Activated CD4-positive, alpha-beta T cell treated with anti-CD3 and anti-CD28 coated beads, Interleukin-2, amount 10 ng/mL, durations not matched to agents 24 days and 14 days (primary cell): ENCODE measurements at regions of chr6 and their contacts with region 1.

Region 1: DNA sequence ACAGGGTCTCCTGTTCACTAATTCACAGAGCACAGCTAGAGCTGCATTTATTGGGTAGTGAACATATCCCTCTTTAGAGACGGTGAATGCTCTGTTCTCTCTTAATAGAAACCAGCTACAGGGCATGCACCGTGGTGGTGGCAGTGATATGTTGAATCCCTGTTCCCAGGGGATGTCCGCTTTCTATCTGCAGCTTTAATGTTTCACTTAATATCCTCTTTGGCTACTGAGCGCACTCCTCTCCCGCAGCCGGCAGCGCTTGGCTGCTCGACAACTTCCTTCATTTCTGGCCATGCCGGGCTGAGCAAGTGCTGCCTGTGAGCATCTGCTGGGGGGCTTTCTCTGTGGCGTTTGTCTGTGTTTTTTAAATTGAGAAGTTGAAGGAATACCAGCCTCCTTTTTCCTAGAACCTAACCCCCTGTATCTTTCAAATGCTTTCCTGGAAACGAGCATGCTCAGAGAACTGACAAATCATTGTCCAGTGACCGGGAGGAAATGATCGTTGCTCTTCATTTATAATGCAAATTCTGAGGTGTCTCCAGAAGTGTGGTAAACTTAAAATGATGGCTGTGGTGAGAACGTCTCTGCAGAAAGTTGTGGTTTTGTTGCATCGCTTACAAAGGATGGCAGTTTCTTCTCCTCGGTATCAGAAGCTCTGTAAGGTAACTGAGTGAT is 297.9 kb downstream of the UTRN start:
- DNase-seq: peak; percentile 91
- H3K4me3 Mint-ChIP-seq: peak overlapping the region; percentile 88
- H3K27ac Mint-ChIP-seq: peak overlapping the region; percentile 92
- H3K4me1 Mint-ChIP-seq: peaks cover 49% of the 10 kb centered on the region
- H3K27me3 Mint-ChIP-seq: no peaks in the 10 kb centered on the region

Region 2: GRCh38 chr6:144595266-144595665 is 12.2 kb after region 1 on chr6:
- intact Hi-C with region 1: loop called (anchors 1 kb)
- DNase-seq: no peak
- H3K4me3 Mint-ChIP-seq: no peak overlapping the region
- H3K27ac Mint-ChIP-seq: no peak overlapping the region
- H3K4me1 Mint-ChIP-seq: peaks cover 18% of the 10 kb centered on the region
- H3K27me3 Mint-ChIP-seq: no peaks in the 10 kb centered on the region

Region 3: DNA sequence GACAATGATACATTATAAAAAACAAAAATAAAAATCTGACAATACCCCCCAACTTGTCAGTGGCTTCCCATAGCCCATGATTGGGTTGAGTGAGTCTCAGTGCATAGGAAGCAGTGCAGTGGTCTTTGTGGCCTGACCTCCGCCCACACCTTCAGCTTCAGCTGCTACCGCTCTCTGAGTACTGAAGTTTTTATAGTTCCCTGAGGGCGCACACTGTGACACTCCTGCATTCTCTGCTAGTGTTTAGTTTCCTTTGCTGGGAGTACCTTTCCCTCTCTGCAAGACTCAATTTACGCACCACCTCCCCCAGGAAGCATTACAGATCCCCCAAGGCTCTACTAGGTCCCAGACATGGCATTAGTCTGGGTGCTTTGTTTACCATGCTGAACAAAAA is 143.1 kb after region 1 on chr6:
- intact Hi-C with region 1: loop called (anchors 5 kb)
- DNase-seq: no peak
- H3K4me3 Mint-ChIP-seq: peak overlapping the region; percentile 15
- H3K27ac Mint-ChIP-seq: peak overlapping the region; percentile 2
- H3K4me1 Mint-ChIP-seq: peaks cover 42% of the 10 kb centered on the region
- H3K27me3 Mint-ChIP-seq: no peaks in the 10 kb centered on the region

Region 4: GRCh38 chr6:145015739-145016558 is 432.9 kb after region 1 on chr6:
- intact Hi-C with region 1: loop called (anchors 1 kb)
- DNase-seq: peak; percentile 63
- H3K4me3 Mint-ChIP-seq: no peak overlapping the region
- H3K27ac Mint-ChIP-seq: peak overlapping the region; percentile 2
- H3K4me1 Mint-ChIP-seq: peaks cover 19% of the 10 kb centered on the region
- H3K27me3 Mint-ChIP-seq: peaks cover 3% of the 10 kb centered on the region

Region 5: GRCh38 chr6:145633981-145634627 is 1051.0 kb after region 1 on chr6:
- intact Hi-C with region 1: loop called (anchors 5 kb)
- DNase-seq: peak; percentile 93
- H3K4me3 Mint-ChIP-seq: no peak overlapping the region
- H3K27ac Mint-ChIP-seq: no peak overlapping the region
- H3K4me1 Mint-ChIP-seq: no peaks in the 10 kb centered on the region
- H3K27me3 Mint-ChIP-seq: no peaks in the 10 kb centered on the region

Region 6: GRCh38 chr6:146357578-146358430 is 1774.7 kb after region 1 on chr6:
- intact Hi-C with region 1: no loop called
- DNase-seq: no peak
- H3K4me3 Mint-ChIP-seq: no peak overlapping the region
- H3K27ac Mint-ChIP-seq: peak overlapping the region; percentile 66
- H3K4me1 Mint-ChIP-seq: peaks cover 10% of the 10 kb centered on the region
- H3K27me3 Mint-ChIP-seq: no peaks in the 10 kb centered on the region